ENCODE measurements at regions of chr17 and their contacts with region 1.

Region 1: DNA sequence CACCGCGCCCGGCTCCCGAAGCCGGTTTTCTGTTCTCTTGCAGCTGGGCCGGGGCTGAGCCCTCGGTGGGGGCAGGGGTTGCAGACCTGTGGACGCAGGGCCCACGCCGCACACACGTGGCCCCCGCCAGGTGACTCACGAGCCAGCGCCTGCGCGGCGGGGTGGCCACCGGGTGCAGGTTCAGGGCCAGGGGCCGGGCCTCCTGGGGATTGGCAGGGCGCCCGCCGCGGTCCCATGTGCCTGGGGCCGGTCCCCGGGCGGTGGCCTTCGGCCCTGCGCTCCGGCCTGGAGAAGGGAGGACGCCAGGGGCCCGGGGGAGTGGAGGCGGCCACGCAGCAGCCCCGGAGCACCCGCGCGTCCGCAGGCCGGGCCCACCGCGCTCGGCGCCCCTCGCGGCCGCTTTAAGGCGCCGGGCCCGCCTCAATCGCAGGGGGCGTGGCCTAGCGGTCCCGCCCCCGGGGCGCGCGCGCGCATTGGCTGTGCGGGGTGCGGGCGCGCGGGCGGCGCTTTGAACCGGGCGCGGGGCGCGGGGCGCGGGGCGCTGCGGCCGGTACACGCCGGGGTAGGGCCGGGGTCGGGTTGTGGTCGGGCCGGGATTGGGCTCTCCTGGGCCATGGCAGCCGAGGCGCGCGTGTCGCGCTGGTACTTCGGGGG is at the start of gene SLC25A10:
- DNase-seq: peak; percentile 76 to 85
- ATAC-seq: peak; percentile 85
- H3K4me3 ChIP-seq: peak within 1 kb of the TSS; percentile 57 to 82 (median 66)
- H3K27ac ChIP-seq: peak within 1 kb of the TSS; percentile 76 to 89 (median 80)
- H3K4me1 ChIP-seq: peaks cover 23 to 31% of the 10 kb centered on the region in 2 donors
- H3K27me3 ChIP-seq: no peaks in the 10 kb centered on the region
- CTCF ChIP-seq: peak in 2 of 5 experiments; percentile 13 to 40
- POLR2A ChIP-seq: peak; percentile 46 to 69
- total RNA-seq, gene SLC25A10: 3.4 to 9.3 (median 6.7) TPM

Region 2: GRCh38 chr17:81676906-81677305 is 35.0 kb before region 1 on chr17:
- in situ Hi-C with region 1: no loop called
- intact Hi-C with region 1: loop called (anchors 5 kb)
- DNase-seq: peak in 1 of 2 donors; percentile 39
- ATAC-seq: peak in 1 of 2 donors; percentile 64
- H3K4me3 ChIP-seq: no peak overlapping the region
- H3K27ac ChIP-seq: no peak overlapping the region
- H3K4me1 ChIP-seq: no peaks in the 10 kb centered on the region
- H3K27me3 ChIP-seq: no peaks in the 10 kb centered on the region
- CTCF ChIP-seq: no peak
- POLR2A ChIP-seq: no peak

Measured in gastrocnemius medialis (tissue), 4 donors.